ENCODE measurements at regions of chr12 and their contacts with region 1.

Region 1: GRCh38 chr12:128783129-128783574 is 40.6 kb downstream of the SLC15A4 start:
- DNase-seq: peak; percentile 62
- CTCF ChIP-seq: no peak

Region 2: GRCh38 chr12:128531170-128531569 is 252.0 kb before region 1 on chr12:
- CTCF ChIA-PET with region 1: no interaction called
- POLR2A ChIA-PET with region 1: no interaction called
- DNase-seq: no peak
- CTCF ChIP-seq: peak; percentile 17

Region 3: DNA sequence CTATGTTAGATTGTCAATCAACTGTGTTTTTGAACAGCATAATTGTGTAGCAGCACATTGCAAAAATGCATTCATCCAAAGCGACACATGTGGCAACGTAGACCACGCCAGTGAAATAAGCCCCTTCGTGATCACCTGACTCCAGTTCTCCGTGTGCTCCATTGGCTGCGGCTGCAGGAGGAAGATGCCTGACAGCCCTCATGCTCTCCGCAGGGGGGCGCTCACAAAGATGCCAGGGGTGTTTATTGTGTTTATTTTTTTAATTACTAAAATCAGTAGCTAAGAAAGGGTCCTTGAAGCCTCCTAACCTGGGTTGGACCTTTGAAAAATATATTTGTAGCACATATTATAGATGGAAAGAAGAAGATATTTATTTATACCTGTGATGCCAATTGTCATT is 75.7 kb before region 1 on chr12:
- CTCF ChIA-PET with region 1: no interaction called
- POLR2A ChIA-PET with region 1: no interaction called
- DNase-seq: no peak
- CTCF ChIP-seq: no peak

Region 4: DNA sequence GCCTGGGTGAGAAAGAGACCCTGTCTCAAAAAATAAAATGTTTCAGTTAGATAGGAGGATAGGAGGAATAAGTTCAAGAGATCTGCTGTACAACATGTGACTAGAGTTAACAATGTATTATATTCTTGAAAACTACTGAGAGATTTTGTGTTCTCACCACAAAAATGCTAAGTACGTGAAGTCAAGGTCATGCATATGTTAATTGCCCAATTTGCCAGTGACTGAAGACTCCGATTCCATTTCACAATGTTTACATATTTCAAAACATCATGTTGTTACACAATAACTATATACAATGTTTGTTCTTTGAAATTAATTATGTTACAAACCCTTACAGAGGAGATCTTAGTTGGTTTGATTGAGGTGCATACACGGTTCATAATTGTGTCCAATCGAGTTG is 11.5 kb before region 1 on chr12:
- CTCF ChIA-PET with region 1: interaction called, 23 read pairs
- POLR2A ChIA-PET with region 1: no interaction called
- DNase-seq: no peak
- CTCF ChIP-seq: no peak